ENCODE measurements at regions of chr13 and their contacts with region 1.

Region 1: GRCh38 chr13:60431108-60431700 is 34.2 kb downstream of the TDRD3 start:
- DNase-seq: no peak
- H3K4me3 Mint-ChIP-seq: no peak overlapping the region
- H3K27ac Mint-ChIP-seq: no peak overlapping the region
- H3K4me1 Mint-ChIP-seq: peaks cover 16% of the 10 kb centered on the region
- H3K27me3 Mint-ChIP-seq: no peaks in the 10 kb centered on the region

Region 2: DNA sequence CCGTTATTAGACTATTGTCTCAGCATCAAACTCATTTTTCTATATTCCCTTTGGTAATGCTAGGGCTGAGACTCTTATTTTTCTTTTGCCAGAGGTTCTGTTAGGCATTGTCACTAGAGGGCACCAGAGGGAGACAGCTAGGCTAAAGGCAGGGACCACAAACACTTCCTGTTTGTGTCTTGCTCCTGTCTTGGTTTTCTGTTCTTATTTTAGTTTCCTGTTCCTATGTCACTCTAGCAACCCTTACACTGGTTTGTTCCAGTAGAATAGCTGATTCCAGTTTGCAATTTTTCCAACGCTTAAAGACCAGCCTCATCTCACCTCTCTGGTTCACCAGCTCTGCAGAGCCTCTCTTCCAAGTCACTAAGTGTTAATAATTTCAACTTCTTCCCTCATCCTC is 1039.5 kb before region 1 on chr13:
- intact Hi-C with region 1: loop called (anchors 2 kb)
- DNase-seq: peak; percentile 35
- H3K4me3 Mint-ChIP-seq: no peak overlapping the region
- H3K27ac Mint-ChIP-seq: no peak overlapping the region
- H3K4me1 Mint-ChIP-seq: no peaks in the 10 kb centered on the region
- H3K27me3 Mint-ChIP-seq: peaks cover 14% of the 10 kb centered on the region

Region 3: DNA sequence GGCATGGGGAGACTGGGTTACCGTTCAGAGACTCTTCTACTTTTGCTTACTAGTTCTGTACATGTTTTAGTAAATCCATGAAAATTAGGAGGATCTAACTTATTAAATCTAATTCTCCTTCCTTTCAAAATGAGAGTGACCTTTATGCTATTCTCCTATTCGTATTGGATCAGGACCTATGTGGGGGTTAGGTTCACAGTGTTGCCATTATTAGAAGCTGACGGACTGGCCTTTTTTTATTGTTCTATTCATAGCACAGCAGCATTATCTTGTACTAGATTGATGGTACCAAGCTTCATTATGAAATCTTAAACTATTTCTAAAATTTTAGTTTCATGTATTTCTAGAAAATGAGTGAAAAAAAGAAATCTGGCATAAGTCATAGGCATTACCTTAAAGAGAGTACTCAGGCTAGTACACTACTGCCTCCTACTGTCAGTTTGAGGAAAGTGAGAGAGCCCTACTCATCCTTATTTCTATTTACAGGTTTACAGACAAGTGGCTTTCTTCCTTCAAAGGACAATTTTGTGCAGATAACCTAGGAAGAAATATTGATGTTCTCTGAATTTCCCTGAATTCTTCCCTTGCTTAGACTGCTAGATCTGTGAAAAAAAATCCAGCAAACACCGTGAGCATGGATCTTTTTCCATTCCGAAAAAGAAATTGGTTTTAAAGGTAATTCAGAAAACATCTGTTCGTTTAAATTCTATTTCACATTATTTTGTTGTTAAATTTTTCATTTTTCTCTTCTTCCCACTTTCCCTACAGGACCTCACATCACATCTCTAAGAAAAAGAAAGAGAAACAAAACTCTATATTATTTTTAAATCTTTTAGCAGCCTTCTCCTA is 753.0 kb before region 1 on chr13:
- intact Hi-C with region 1: loop called (anchors 5 kb)
- DNase-seq: no peak
- H3K4me3 Mint-ChIP-seq: no peak overlapping the region
- H3K27ac Mint-ChIP-seq: no peak overlapping the region
- H3K4me1 Mint-ChIP-seq: peaks cover 3% of the 10 kb centered on the region
- H3K27me3 Mint-ChIP-seq: no peaks in the 10 kb centered on the region

Region 4: DNA sequence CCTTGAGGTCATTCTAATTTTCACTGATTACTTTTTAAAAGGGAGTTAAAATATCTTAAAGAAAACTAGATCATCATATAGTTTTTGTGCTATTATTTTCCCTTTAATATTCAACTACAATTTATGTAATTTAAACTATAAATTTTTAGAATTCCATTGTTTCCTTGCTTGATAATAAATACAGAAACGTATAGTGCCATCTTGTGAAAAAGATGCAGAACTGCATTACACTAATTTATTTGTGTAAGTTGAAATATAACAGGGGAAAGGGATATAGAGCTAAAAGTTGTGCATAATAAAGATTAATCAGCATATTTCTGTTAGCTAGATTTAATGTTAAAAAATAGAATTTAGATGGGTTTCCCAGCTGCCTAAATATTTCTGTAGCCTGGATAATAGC is 95.7 kb before region 1 on chr13:
- intact Hi-C with region 1: loop called (anchors 1 kb)
- DNase-seq: no peak
- H3K4me3 Mint-ChIP-seq: no peak overlapping the region
- H3K27ac Mint-ChIP-seq: no peak overlapping the region
- H3K4me1 Mint-ChIP-seq: no peaks in the 10 kb centered on the region
- H3K27me3 Mint-ChIP-seq: peaks cover 33% of the 10 kb centered on the region

Region 5: DNA sequence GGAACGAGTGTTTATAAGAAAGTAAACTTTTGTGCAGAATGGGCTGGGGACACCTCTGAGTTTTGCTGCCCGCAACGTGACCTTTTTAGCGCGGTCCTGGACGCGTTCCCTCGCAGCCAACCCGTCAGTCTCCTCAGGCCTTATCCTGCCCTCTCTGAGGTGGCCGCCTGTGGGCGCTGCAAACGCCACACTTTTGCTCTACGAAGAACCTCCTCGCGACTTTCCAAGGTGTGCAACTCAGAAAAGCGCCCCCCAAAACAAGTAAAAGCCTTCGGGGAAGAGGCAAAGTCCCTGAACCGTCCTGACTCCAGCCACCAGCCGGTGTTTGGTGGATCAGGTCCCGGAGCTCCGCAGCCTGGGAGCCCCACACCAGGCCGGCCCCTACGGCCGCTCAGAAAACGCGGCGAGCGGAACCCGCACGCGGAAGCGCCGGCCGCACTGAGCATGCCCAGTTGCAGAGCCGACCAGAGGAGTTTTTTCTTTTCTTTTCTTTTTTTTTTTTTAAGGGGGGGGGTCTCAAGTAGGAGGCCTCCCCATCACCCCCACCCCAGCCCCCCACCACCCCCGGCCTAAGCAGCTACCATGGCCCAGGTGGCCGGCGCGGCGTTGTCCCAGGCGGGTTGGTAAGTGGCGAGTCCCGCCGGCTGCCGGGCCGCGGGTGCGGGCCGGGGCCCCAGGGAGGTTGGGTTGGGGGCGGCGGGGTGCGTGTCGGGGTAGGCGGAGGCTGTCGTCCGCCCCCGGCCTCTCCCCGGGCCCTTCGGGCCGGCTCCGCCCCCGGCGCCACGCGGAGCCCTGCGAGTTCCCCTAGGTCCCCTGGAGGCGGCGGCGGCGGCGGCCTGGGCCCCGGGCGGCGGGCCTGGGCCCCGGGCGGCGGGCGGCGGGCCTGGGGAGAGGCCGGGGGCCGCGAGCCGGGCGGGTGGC is 34.2 kb before region 1 on chr13 and contains the start of gene TDRD3:
- intact Hi-C with region 1: loop called (anchors 5 kb)
- DNase-seq: peak; percentile 81
- H3K4me3 Mint-ChIP-seq: peak within 1 kb of the TSS; percentile 94
- H3K27ac Mint-ChIP-seq: peak within 1 kb of the TSS; percentile 97
- H3K4me1 Mint-ChIP-seq: peaks cover 28% of the 10 kb centered on the region
- H3K27me3 Mint-ChIP-seq: no peaks in the 10 kb centered on the region
- total RNA-seq, gene TDRD3: 19.0 and 22.0 TPM in 2 replicates

Region 6: GRCh38 chr13:60494296-60494695 is 63.1 kb after region 1 on chr13:
- intact Hi-C with region 1: no loop called
- DNase-seq: no peak
- H3K4me3 Mint-ChIP-seq: no peak overlapping the region
- H3K27ac Mint-ChIP-seq: no peak overlapping the region
- H3K4me1 Mint-ChIP-seq: no peaks in the 10 kb centered on the region
- H3K27me3 Mint-ChIP-seq: no peaks in the 10 kb centered on the region

Region 7: DNA sequence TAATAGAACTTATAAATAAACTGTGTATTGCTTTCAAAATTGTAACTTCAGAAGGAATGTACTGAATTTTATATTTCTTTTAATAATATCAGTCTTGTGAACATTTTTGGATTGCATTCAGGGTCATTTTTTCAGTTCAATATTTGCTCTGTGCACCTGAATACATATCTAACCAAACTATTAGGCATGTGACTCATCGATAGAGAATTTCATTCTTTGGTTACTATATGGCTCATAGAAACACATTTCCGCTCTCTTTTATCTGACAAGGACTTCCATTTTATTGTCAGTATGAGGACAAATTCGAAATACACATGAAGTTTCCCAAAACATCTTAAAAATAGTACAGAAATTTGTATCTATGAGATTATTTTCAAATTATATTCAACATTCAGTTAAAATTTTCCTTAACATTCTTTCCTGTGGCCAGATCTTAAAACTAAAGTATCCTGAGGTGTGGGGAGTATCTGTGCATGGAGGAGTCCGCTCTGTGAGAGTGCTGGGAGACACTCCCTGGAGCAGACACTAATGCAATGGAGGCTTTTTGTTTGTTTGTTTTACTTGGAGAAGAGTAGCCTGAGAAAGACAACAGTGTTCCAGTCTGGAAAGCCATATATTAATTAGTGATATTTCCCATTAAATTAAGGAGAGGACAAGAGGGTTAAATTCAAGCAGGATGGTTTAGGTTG is 500.8 kb after region 1 on chr13:
- intact Hi-C with region 1: no loop called
- DNase-seq: no peak
- H3K4me3 Mint-ChIP-seq: no peak overlapping the region
- H3K27ac Mint-ChIP-seq: no peak overlapping the region
- H3K4me1 Mint-ChIP-seq: no peaks in the 10 kb centered on the region
- H3K27me3 Mint-ChIP-seq: no peaks in the 10 kb centered on the region

Region 8: DNA sequence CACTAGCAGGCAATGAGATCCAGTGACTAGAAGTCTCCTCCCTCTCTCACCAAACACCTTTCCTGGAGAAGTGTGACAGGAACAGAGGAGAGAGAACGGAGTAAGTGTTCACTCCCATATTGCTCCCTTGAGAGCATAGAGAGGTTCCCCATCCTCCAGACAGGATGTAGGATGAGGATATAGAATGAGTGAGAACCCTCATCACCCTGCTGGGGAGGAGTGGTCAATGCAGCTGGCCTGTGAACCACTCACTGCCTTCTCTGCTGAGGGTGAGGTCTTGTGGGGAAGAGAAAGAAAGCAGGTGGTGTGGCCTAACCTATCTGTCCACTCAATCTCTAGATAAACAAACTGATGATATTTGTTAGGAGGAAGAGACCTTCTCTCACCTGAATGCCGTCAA is 597.9 kb after region 1 on chr13:
- intact Hi-C with region 1: no loop called
- DNase-seq: no peak
- H3K4me3 Mint-ChIP-seq: no peak overlapping the region
- H3K27ac Mint-ChIP-seq: no peak overlapping the region
- H3K4me1 Mint-ChIP-seq: no peaks in the 10 kb centered on the region
- H3K27me3 Mint-ChIP-seq: no peaks in the 10 kb centered on the region